ENCODE measurements at regions of chr1 and their contacts with region 1.

Region 1: GRCh38 chr1:113783254-113784099 is 24.2 kb upstream of the PHTF1 start:
- DNase-seq: peak; percentile 67 to 94 (median 88)
- H3K4me3 ChIP-seq: peak overlapping the region in 5 of 7 experiments; percentile 19 to 66 (median 41)
- H3K27ac ChIP-seq: peak overlapping the region in 1 of 2 experiments; percentile 45
- H3K4me1 ChIP-seq: peaks cover 34 to 64% (median 51%) of the 10 kb centered on the region in 4 experiments
- H3K27me3 ChIP-seq: no peaks in the 10 kb centered on the region

Region 2: DNA sequence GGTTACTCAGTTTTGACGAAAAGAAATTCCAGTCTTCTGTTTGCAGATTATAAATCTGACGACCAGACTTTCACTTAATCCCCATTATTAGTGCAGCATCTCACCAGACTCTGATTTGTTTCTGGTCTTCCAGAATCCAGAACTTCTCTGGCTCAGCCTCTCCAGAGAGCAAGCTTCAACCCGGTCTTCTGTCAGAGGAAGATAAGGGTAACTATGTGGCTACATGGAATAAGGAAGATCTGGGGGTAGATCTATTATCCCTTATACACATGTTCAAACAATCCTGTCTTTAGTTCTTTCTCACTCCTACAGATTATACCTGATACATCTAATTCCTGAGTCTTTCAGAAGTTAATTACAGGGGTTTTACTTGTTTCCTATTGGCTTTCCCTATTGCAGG is 34.1 kb before region 1 on chr1:
- CTCF ChIA-PET with region 1: no interaction called
- POLR2A ChIA-PET with region 1: no interaction called
- DNase-seq: no peak
- H3K4me3 ChIP-seq: no peak overlapping the region
- H3K27ac ChIP-seq: no peak overlapping the region
- H3K4me1 ChIP-seq: peaks cover 0 to 2% (median 0%) of the 10 kb centered on the region in 4 experiments
- H3K27me3 ChIP-seq: no peaks in the 10 kb centered on the region

Region 3: GRCh38 chr1:113768901-113769600 is 14.4 kb before region 1 on chr1:
- CTCF ChIA-PET with region 1: interaction called, 10 read pairs
- POLR2A ChIA-PET with region 1: interaction called, 3 read pairs
- DNase-seq: peak in 2 of 3 donors; percentile 43 to 55
- H3K4me3 ChIP-seq: peak overlapping the region in 3 of 7 experiments; percentile 29 to 43 (median 33)
- H3K27ac ChIP-seq: peak overlapping the region in 1 of 2 experiments; percentile 29
- H3K4me1 ChIP-seq: peaks cover 1 to 22% (median 7%) of the 10 kb centered on the region in 4 experiments
- H3K27me3 ChIP-seq: no peaks in the 10 kb centered on the region

Region 4: GRCh38 chr1:113793878-113794834 is 10.7 kb after region 1 on chr1:
- CTCF ChIA-PET with region 1: interaction called, 16 read pairs
- POLR2A ChIA-PET with region 1: interaction called, 8 read pairs
- DNase-seq: no peak
- H3K4me3 ChIP-seq: no peak overlapping the region
- H3K27ac ChIP-seq: no peak overlapping the region
- H3K4me1 ChIP-seq: peaks cover 0 to 4% (median under 1%) of the 10 kb centered on the region in 4 experiments
- H3K27me3 ChIP-seq: no peaks in the 10 kb centered on the region

Measured in common myeloid progenitor, CD34-positive (primary cell).